ENCODE measurements at regions of chr17 and their contacts with region 1.

Region 1: GRCh38 chr17:67312265-67312664 is 54.1 kb downstream of the PSMD12 start:
- H3K4me3 ChIP-seq: no peak overlapping the region
- H3K27ac ChIP-seq: no peak overlapping the region
- H3K4me1 ChIP-seq: no peaks in the 10 kb centered on the region
- CTCF ChIP-seq: no peak

Region 2: GRCh38 chr17:67324330-67324729 is 12.1 kb after region 1 on chr17:
- CTCF ChIA-PET with region 1: no interaction called
- POLR2A ChIA-PET with region 1: interaction called, 14 read pairs
- H3K4me3 ChIP-seq: no peak overlapping the region
- H3K27ac ChIP-seq: no peak overlapping the region
- H3K4me1 ChIP-seq: no peaks in the 10 kb centered on the region
- CTCF ChIP-seq: no peak

Region 3: GRCh38 chr17:67411397-67411796 is 99.1 kb after region 1 on chr17:
- CTCF ChIA-PET with region 1: no interaction called
- POLR2A ChIA-PET with region 1: no interaction called
- H3K4me3 ChIP-seq: no peak overlapping the region
- H3K27ac ChIP-seq: no peak overlapping the region
- H3K4me1 ChIP-seq: no peaks in the 10 kb centered on the region
- CTCF ChIP-seq: no peak

Region 4: GRCh38 chr17:67475236-67475937 is 163.1 kb after region 1 on chr17:
- CTCF ChIA-PET with region 1: no interaction called
- POLR2A ChIA-PET with region 1: no interaction called
- H3K4me3 ChIP-seq: no peak overlapping the region
- H3K27ac ChIP-seq: no peak overlapping the region
- H3K4me1 ChIP-seq: no peaks in the 10 kb centered on the region; the same call in 1 of the 2 replicates
- CTCF ChIP-seq: peak; percentile 89

Region 5: DNA sequence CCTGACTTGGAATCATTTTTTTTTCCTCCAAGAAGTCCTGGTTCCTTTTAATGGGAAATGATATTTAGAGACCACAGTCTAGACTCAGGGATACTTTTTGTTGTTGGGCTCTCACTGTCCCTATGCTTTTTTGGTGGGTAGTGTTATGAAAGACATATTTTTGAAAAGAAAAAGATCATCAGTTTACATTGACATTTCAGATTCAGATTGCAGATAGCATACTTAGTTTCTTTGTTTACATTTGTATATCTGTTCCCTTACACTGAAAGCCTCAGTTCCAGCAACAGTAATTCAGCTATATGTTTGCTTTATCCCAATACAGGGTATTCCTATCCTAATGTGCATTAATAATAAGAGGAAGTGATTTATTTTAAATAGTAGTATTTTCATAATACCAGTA is 569.9 kb after region 1 on chr17:
- CTCF ChIA-PET with region 1: no interaction called
- POLR2A ChIA-PET with region 1: interaction called, 12 read pairs
- H3K4me3 ChIP-seq: no peak overlapping the region
- H3K27ac ChIP-seq: no peak overlapping the region
- H3K4me1 ChIP-seq: peaks cover 13% of the 10 kb centered on the region
- CTCF ChIP-seq: no peak